HEK293 (cell line): ENCODE measurements at regions of chr14 and their contacts with region 1.

Region 1: DNA sequence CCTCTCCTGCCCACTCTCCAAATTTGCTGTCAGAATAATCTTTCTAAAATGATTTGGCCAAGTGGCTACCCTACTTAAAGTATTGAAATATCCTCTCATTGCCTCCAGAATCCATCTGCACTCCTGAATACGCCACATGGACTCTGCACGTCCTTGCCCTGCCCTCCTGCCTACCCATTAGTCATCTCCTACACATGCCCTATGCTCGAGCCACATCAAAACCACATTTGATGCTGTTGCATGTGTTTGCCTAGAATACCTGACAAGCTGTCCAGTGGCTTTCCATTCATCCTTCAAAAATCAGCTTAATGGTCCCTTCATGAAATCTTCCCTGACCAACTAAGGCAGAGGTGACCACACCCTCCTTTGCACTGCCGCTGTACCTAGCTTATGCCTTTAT is 17.0 kb downstream of the VCPKMT start:
- H3K4me3 ChIP-seq: no peak overlapping the region
- H3K27ac ChIP-seq: no peak overlapping the region
- H3K4me1 ChIP-seq: no peaks in the 10 kb centered on the region
- CTCF ChIP-seq: no peak

Region 2: GRCh38 chr14:49862089-49862673 is 237.2 kb before region 1 on chr14:
- CTCF ChIA-PET with region 1: interaction called, 70 read pairs
- POLR2A ChIA-PET with region 1: no interaction called
- H3K4me3 ChIP-seq: peak overlapping the region; percentile 77
- H3K27ac ChIP-seq: peak overlapping the region; percentile 75
- H3K4me1 ChIP-seq: peaks cover 2% of the 10 kb centered on the region; the same call in 1 of the 2 replicates
- CTCF ChIP-seq: peak; percentile 96